Aorta (tissue), 5 donors: ENCODE measurements at regions of chr18 and their contacts with region 1.

Region 1: DNA sequence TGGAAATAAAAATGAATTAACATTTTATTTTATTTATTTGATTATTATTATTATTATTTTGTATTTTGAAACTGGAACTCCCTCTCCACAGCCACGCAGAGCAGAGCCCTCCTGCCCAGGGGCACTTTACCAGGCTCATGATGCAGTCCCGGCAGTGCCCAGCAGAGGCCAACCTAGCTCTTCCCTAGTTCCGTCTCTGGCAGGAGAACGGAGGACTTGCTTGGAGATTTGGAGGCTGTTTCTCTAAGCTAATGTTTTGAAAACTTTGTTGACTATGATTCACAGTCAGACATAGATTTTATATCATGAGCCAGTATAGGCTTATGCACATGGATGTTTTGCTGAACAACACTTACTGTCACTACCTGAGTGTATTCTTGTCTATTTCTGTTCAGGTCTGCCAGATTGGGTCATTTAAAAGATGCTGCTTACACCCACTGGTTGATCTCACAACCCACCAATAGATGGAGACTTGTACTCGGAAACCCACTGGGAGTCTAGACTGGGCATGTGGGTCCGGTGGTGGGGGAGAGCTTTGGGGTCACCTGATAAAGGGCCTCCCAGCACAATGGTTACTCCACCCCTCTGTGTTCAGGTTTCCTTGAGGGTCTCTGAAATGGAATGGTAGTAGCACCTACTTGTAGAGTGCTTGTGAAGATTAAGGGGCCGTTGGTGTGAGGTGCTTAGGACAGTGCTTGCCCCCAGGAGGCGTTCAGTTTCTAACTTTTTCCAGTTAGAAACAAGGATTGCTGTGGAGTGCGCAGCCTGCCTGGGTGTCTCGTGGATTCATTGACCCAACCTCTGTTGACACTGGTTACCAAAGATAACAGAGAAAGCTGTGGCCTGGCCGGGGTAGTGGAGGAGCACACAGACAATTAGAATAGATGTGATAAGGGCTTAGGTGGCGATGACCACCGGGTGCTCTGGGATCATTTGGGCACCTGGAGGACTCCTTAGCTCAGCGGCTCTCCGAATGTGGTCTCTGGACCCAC is 177.3 kb downstream of the HAUS1 start:
- DNase-seq: peak; percentile 67 to 86
- ATAC-seq: peak; percentile 85
- H3K4me3 ChIP-seq: no peak overlapping the region
- H3K27ac ChIP-seq: no peak overlapping the region
- H3K4me1 ChIP-seq: no peaks in the 10 kb centered on the region
- H3K27me3 ChIP-seq: no peaks in the 10 kb centered on the region

Region 2: DNA sequence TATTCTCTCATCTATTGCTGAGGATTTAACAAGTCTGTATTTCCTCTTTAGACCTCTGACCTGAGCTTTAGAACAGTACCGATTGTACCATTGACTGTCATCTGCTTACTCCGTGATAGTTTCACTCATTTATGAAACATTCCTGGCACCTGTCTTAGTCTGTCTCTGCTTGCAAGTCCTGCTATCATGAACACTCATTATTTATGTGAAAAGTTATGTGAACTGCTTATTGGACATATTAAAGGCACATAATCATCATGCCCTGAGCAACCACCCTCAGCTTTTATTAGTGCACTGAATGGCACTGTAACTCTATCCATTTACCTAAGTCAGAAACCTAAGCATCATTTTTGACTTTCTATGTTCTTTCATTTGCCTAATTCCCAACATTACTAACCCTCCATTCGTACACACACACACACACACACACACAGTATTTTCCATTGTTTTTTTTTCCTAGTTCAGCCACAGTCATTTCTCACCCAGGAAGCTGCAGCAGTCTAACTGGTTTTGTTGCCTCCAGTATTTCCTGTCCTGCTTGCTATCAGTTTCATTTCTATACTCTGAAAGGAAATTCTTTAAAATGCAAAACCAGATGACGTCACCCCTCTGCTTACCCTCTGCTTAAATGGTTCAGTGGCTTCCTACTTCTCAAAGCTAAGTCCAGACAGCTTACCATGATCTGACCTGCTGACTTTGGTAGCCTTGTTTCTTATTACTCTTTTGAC is 31.2 kb before region 1 on chr18:
- intact Hi-C with region 1: no loop called
- DNase-seq: no peak
- ATAC-seq: peak; percentile 44
- H3K4me3 ChIP-seq: no peak overlapping the region
- H3K27ac ChIP-seq: no peak overlapping the region
- H3K4me1 ChIP-seq: peaks cover 3 to 10% of the 10 kb centered on the region in 2 donors
- H3K27me3 ChIP-seq: no peaks in the 10 kb centered on the region

Region 3: GRCh38 chr18:46481048-46481846 is 199.8 kb after region 1 on chr18:
- intact Hi-C with region 1: loop called (anchors 5 kb)
- DNase-seq: no peak
- ATAC-seq: peak; percentile 17
- H3K4me3 ChIP-seq: no peak overlapping the region
- H3K27ac ChIP-seq: no peak overlapping the region
- H3K4me1 ChIP-seq: no peaks in the 10 kb centered on the region
- H3K27me3 ChIP-seq: no peaks in the 10 kb centered on the region

Region 4: GRCh38 chr18:46660955-46661749 is 379.7 kb after region 1 on chr18:
- intact Hi-C with region 1: loop called (anchors 2 kb)
- DNase-seq: peak in 1 of 2 donors; percentile 55
- ATAC-seq: no peak
- H3K4me3 ChIP-seq: no peak overlapping the region
- H3K27ac ChIP-seq: no peak overlapping the region
- H3K4me1 ChIP-seq: no peaks in the 10 kb centered on the region
- H3K27me3 ChIP-seq: no peaks in the 10 kb centered on the region